Activated CD4-positive, alpha-beta T cell treated with anti-CD3 and anti-CD28 coated beads, Interleukin-2, amount 10 ng/mL, durations not matched to agents 24 days and 14 days (primary cell): ENCODE measurements at regions of chr2 and their contacts with region 1.

Region 1: DNA sequence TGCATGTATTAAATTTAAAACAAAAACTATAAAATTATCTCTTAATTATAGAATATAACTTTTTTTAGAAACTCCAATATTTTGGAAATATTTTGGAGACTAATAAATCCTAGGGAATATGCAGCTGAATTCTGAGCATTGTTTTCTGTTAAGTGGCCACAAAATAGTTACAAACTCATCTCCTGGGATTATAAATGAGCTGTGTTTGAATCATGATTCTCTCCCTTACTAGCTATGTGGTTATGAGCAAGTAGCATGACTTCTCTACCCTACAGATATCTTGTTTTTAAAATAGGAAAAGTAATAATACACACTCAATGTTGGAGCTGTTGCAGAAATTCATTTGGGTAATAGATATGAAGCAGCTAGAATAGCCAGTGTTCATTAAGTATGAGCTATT is 137.9 kb upstream of the ITGA4 start:
- DNase-seq: no peak
- H3K4me3 Mint-ChIP-seq: no peak overlapping the region
- H3K27ac Mint-ChIP-seq: no peak overlapping the region
- H3K4me1 Mint-ChIP-seq: peaks cover 14% of the 10 kb centered on the region
- H3K27me3 Mint-ChIP-seq: no peaks in the 10 kb centered on the region

Region 2: DNA sequence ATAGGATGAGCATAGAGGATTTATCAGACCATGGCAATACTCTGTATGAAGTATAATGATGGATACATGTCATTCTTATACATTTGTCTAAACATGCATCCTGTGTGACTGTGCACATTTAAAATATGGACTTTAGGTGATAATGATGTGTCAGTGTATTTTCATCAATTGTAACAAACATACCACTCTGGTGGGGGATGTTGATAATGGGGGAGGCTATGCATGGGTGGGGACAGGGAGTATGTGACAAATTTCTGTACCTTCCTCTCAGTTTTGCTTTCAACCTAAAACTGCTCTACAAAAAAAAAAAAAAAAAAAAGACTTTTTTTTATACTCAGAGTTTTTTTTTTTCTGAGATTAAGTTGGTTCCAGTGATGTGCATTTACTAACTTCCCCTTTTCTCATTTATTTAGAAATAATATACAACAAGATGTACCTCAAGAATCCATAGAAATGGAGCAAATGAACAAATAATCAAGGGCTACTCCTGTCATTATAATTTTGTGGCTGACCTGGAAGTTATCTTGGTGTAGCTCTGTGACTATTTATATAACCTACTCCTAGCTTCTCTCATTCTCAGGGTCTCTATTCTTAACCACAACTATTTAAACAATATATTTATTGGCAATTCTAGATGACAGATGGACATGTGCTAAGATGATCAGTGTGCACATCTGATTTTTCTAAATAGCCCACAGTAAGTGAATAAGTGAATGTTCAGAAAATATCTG is 29.0 kb after region 1 on chr2:
- intact Hi-C with region 1: loop called (anchors 2 kb)
- DNase-seq: no peak
- H3K4me3 Mint-ChIP-seq: no peak overlapping the region
- H3K27ac Mint-ChIP-seq: no peak overlapping the region
- H3K4me1 Mint-ChIP-seq: peaks cover 15% of the 10 kb centered on the region
- H3K27me3 Mint-ChIP-seq: no peaks in the 10 kb centered on the region

Region 3: GRCh38 chr2:181374781-181375675 is 55.7 kb after region 1 on chr2:
- intact Hi-C with region 1: no loop called
- DNase-seq: no peak
- H3K4me3 Mint-ChIP-seq: no peak overlapping the region
- H3K27ac Mint-ChIP-seq: no peak overlapping the region
- H3K4me1 Mint-ChIP-seq: peaks cover 17% of the 10 kb centered on the region
- H3K27me3 Mint-ChIP-seq: no peaks in the 10 kb centered on the region